PC-9 (cell line): ENCODE measurements at regions of chrX and their contacts with region 1.

Region 1: GRCh38 chrX:40845331-40845911 is 110.1 kb upstream of the MED14 start:
- DNase-seq: no peak
- H3K4me3 ChIP-seq: no peak overlapping the region
- H3K27ac ChIP-seq: no peak overlapping the region
- H3K4me1 ChIP-seq: no peaks in the 10 kb centered on the region
- H3K27me3 ChIP-seq: no peaks in the 10 kb centered on the region
- CTCF ChIP-seq: no peak

Region 2: DNA sequence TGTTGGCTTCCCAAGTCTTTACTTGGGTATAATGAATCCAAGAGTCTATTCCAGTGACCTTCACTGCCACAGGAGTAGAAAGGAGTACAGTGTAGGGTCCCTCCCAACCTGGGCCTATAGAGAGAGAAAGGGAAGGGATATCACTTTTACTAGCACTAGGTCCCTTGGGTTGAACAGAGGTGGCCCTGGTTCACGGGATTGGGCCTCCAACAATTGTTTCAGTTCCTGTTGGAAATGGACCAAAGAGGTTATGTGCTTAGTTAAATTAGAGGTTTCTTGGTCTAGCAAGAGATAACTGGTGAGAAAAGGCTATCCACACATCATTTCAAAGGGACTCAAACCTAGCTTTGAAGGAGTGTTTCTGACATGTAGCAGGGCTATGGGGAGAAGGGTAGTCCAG is 53.0 kb before region 1 on chrX:
- CTCF ChIA-PET with region 1: no interaction called
- POLR2A ChIA-PET with region 1: no interaction called
- intact Hi-C with region 1: no loop called
- DNase-seq: no peak
- H3K4me3 ChIP-seq: no peak overlapping the region
- H3K27ac ChIP-seq: no peak overlapping the region
- H3K4me1 ChIP-seq: peaks cover 5% of the 10 kb centered on the region; the same call in 1 of the 2 replicates
- H3K27me3 ChIP-seq: no peaks in the 10 kb centered on the region
- CTCF ChIP-seq: no peak

Region 3: GRCh38 chrX:40908857-40909475 is 63.5 kb after region 1 on chrX:
- CTCF ChIA-PET with region 1: no interaction called
- POLR2A ChIA-PET with region 1: no interaction called
- intact Hi-C with region 1: loop called (anchors 10 kb)
- DNase-seq: peak in 1 of 2 experiments; percentile 65
- H3K4me3 ChIP-seq: no peak overlapping the region
- H3K27ac ChIP-seq: peak overlapping the region; percentile 89
- H3K4me1 ChIP-seq: peaks cover 33% of the 10 kb centered on the region
- H3K27me3 ChIP-seq: no peaks in the 10 kb centered on the region
- CTCF ChIP-seq: no peak